Astrocyte of the cerebellum (primary cell): ENCODE measurements at regions of chr15 and their contacts with region 1.

Region 1: DNA sequence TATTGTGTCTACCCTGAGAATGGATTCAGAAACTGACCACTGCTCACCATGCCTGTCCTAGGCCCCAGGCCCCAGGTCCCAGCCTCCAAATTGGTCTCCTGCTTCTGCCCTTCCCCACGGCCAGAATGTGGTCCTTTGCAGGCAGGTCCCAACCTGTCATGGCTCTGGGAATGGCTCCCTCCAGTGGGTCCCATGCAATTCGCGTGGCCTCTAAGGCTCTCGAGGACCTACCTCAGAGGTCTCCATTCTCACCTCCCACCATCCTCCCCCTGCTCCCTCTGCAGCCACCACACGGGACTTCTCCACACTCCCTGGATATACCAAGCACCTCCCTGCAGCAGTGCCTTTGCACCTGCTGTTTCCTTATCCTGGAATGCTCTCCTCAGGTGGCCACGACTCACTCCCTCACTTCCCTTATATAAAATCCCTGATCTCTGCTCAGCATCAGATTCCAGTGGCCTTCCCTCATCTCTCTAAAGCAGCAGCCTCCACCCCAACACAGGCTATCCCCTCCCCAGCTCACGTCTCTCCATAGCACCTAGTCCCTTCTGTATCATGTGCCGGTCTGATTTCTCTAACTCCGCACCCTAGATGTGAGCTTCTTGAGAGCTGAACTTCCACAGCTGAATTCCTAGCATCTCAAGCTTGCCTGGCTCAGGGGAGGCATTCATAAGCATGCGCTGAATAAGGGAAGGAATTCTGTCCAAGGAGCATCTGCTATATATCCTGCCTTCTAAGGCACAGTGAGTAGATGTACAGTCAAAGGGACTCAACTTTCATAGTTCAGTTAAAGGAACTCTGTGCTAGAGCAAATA is 56.9 kb downstream of the ARRDC4 start:
- DNase-seq: no peak
- H3K4me3 ChIP-seq: no peak overlapping the region
- CTCF ChIP-seq: no peak

Region 2: DNA sequence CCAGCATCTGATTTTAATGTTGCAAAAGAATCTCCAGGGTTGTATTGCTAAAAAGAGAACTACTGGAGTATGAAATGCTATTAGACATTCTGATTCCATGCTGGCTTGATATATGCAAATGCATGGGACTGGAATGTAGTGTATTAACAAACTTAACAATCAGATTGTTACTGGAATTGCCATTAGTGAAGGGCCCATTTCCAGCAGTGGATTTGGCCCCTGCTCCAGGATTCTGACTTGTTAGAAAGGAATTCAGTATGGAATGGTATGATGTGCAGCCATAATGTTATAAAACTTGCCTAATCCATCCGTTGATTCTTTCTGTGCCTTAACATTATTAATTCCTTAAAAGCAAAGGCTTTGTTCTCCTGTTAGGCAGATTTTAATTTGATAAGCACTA is 49.0 kb before region 1 on chr15:
- in situ Hi-C with region 1: loop called (anchors 5 kb)
- DNase-seq: peak; percentile 94
- H3K4me3 ChIP-seq: no peak overlapping the region
- CTCF ChIP-seq: no peak

Region 3: DNA sequence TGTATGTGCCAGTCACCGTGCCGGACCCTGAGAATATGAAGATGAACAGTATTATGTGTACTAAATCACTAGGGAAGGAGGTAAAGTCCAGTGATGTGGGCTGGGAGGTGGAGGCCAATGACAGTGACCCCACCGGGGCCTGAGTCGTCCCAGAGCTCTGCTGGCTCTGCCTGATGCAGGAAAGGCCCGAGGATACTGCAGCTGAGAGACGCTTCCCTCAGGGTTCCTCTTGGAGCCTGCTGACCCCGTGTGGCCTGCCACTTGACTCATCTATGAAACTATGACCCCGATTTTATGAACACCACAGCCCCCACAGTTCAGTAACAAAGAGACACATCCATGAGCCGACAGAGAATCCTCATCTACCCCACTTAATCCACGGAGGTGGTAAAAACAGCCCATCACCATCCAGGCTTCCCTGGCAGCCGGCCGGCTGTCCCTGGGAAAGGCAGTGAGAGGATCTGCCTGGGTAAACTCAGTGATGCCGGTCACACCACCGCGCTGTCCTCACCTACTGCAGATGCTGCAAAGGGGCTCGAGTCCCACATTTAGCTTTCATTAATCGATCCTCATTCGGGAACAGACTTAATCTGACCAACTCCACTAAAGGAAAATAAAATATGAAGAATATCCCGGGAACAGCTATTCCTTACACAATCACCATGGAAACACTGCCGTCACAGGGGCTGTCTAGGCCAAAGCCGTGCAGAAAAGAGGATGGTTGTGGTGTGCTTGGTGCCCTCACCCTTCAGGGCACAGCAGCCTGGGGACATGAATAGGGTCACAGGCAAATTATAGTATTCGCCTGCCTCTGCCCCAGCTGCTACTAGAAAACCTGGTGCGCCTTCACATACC is 26.0 kb after region 1 on chr15:
- in situ Hi-C with region 1: no loop called
- DNase-seq: no peak
- H3K4me3 ChIP-seq: no peak overlapping the region
- CTCF ChIP-seq: no peak

Region 4: DNA sequence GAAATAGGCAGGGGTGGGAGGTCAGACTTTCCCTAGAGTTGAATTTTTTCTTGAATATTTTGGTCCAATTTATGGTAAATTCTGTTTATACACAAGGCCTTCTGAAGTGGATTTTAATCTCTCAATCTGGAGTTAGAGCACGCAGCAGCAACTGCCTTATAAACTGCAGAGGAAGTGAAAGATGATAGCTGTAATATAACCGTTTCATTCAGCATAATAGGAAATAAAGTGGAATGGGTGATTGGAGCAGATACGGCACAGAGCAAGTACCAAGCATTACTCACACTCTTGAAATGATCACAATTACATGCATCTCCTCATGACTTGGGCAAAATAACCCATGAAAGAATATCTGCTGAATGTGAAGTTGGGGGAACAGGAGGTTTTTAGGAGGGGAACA is 50.0 kb after region 1 on chr15:
- in situ Hi-C with region 1: loop called (anchors 5 kb)
- DNase-seq: no peak
- H3K4me3 ChIP-seq: no peak overlapping the region
- CTCF ChIP-seq: no peak